CD8-positive, alpha-beta T cell (primary cell): ENCODE measurements at regions of chr16 and their contacts with region 1.

Region 1: DNA sequence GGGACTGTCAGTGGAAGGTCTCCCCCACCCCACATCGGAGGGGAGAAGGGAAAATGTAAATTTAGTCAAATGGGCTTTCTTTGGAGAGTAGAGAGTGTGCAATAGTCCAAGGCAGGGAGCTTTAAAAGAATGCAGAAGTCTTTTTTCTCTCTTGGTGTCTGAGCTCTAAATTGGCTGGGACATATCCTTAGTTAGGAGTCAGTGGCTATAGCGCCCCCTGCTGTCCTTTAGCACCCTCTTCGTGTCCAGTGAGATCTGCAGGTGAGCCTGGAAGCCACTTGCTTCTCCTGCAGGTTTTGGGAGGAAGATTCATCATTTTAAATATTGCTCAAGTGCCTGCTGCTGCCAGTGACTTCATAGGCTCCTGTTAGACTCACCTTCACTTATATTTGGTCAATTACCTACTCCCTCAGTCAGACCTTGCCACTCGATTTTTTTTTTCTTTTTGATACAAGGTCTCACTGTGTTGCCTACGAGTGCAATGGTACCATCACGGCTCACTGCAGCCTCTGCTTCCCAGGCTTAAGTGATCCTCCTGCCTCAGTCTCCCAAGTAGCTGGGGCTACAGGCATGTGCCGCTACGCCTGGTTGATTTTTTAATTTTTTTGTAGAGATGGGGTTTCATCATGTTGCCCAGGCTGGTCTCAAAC is 174.8 kb downstream of the PRKCB start:
- DNase-seq: peak; percentile 54 to 89 (median 85)
- ATAC-seq: no peak
- H3K4me3 ChIP-seq: no peak overlapping the region
- H3K4me3 Mint-ChIP-seq: no peak overlapping the region
- H3K27ac ChIP-seq: no peak overlapping the region
- H3K27ac Mint-ChIP-seq: peak overlapping the region; percentile 18
- H3K4me1 ChIP-seq: peaks cover 50% of the 10 kb centered on the region
- H3K4me1 Mint-ChIP-seq: peaks cover 66% of the 10 kb centered on the region
- H3K27me3 ChIP-seq: no peaks in the 10 kb centered on the region
- H3K27me3 Mint-ChIP-seq: no peaks in the 10 kb centered on the region
- CTCF ChIP-seq: peak; percentile 86

Region 2: GRCh38 chr16:23729503-23730424 is 280.8 kb before region 1 on chr16:
- CTCF ChIA-PET with region 1: no interaction called
- POLR2A ChIA-PET with region 1: no interaction called
- intact Hi-C with region 1: loop called in 1 of 2 experiments (anchors 2 kb)
- DNase-seq: no peak
- ATAC-seq: no peak
- H3K4me3 ChIP-seq: no peak overlapping the region
- H3K4me3 Mint-ChIP-seq: no peak overlapping the region
- H3K27ac ChIP-seq: no peak overlapping the region
- H3K27ac Mint-ChIP-seq: no peak overlapping the region
- H3K4me1 ChIP-seq: peaks cover 5% of the 10 kb centered on the region
- H3K4me1 Mint-ChIP-seq: no peaks in the 10 kb centered on the region
- H3K27me3 ChIP-seq: no peaks in the 10 kb centered on the region
- H3K27me3 Mint-ChIP-seq: peaks cover 16% of the 10 kb centered on the region
- CTCF ChIP-seq: no peak

Region 3: GRCh38 chr16:23835390-23836077 is 175.0 kb before region 1 on chr16 and contains the start of gene PRKCB:
- CTCF ChIA-PET with region 1: interaction called, 8 read pairs
- POLR2A ChIA-PET with region 1: interaction called, 3 read pairs
- intact Hi-C with region 1: loop called in 1 of 2 experiments (anchors 1 kb)
- DNase-seq: peak; percentile 80 to 94 (median 88)
- ATAC-seq: peak; percentile 88
- H3K4me3 ChIP-seq: peak within 1 kb of the TSS; percentile 71 to 93
- H3K4me3 Mint-ChIP-seq: peak within 1 kb of the TSS; percentile 99
- H3K27ac ChIP-seq: peak within 1 kb of the TSS; percentile 40 to 44
- H3K27ac Mint-ChIP-seq: peak within 1 kb of the TSS; percentile 95
- H3K4me1 ChIP-seq: peaks cover 48% of the 10 kb centered on the region
- H3K4me1 Mint-ChIP-seq: peaks cover 55% of the 10 kb centered on the region
- H3K27me3 ChIP-seq: no peaks in the 10 kb centered on the region
- H3K27me3 Mint-ChIP-seq: no peaks in the 10 kb centered on the region
- CTCF ChIP-seq: no peak
- total RNA-seq, gene PRKCB: 62.8 to 64.4 TPM

Region 4: GRCh38 chr16:23877107-23878090 is 133.2 kb before region 1 on chr16:
- CTCF ChIA-PET with region 1: interaction called, 235 read pairs
- POLR2A ChIA-PET with region 1: interaction called, 13 read pairs
- intact Hi-C with region 1: loop called (anchors 1 kb)
- DNase-seq: peak in 3 of 9 experiments; percentile 27 to 48 (median 39)
- ATAC-seq: peak; percentile 65
- H3K4me3 ChIP-seq: no peak overlapping the region
- H3K4me3 Mint-ChIP-seq: no peak overlapping the region
- H3K27ac ChIP-seq: no peak overlapping the region
- H3K27ac Mint-ChIP-seq: peak overlapping the region; percentile 64
- H3K4me1 ChIP-seq: peaks cover 72% of the 10 kb centered on the region
- H3K4me1 Mint-ChIP-seq: peaks cover 81% of the 10 kb centered on the region
- H3K27me3 ChIP-seq: no peaks in the 10 kb centered on the region
- H3K27me3 Mint-ChIP-seq: no peaks in the 10 kb centered on the region
- CTCF ChIP-seq: peak; percentile 40

Region 5: DNA sequence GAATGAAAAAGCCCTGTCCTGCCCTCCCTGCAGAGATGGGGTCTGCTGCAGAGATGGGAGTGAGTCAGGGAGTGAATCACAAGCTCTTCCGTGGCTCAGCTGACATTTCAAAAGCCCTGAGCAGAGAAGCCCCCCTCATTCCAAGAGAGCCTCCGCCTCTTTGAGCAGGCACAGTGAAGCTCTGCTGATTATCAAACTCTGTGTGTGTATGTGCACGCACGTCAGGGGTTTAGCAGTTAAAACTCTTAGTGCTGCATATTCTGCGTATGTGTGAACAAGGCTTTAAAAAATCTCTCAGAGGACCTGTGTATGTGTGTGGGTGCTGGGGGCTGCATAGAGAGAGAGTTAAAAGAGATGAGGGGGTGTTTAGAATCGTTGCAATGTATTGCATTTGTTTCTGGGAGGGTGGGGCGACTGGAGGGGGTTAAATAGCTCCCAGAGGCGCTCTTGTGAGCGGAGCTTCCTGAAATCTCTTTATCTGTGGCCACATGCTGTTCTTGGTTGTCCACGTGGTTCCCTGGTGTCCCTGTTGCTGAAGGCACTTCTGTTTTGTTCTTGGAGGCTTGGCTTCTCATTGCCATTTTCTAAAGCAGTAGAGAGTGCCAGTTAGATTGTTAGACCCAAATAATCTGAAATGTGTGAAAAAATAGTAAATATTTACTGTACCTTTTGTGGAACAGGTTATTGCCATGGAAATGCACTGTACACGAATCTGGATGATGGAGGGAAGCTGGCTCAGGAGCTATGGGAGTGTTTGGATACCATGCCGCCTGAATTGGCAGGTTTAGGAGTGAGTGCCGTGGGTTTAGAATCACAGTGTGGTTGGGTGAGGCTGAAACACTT is 58.2 kb before region 1 on chr16:
- CTCF ChIA-PET with region 1: interaction called, 27 read pairs
- POLR2A ChIA-PET with region 1: interaction called, 9 read pairs
- intact Hi-C with region 1: loop called (anchors 1 to 2 kb)
- DNase-seq: peak in 6 of 9 experiments; percentile 14 to 62 (median 52)
- ATAC-seq: peak; percentile 46
- H3K4me3 ChIP-seq: no peak overlapping the region
- H3K4me3 Mint-ChIP-seq: peak overlapping the region; percentile 76
- H3K27ac ChIP-seq: peak overlapping the region; percentile 8 to 45
- H3K27ac Mint-ChIP-seq: peak overlapping the region; percentile 96
- H3K4me1 ChIP-seq: peaks cover 73% of the 10 kb centered on the region
- H3K4me1 Mint-ChIP-seq: peaks cover 91% of the 10 kb centered on the region
- H3K27me3 ChIP-seq: no peaks in the 10 kb centered on the region
- H3K27me3 Mint-ChIP-seq: no peaks in the 10 kb centered on the region
- CTCF ChIP-seq: no peak

Region 6: DNA sequence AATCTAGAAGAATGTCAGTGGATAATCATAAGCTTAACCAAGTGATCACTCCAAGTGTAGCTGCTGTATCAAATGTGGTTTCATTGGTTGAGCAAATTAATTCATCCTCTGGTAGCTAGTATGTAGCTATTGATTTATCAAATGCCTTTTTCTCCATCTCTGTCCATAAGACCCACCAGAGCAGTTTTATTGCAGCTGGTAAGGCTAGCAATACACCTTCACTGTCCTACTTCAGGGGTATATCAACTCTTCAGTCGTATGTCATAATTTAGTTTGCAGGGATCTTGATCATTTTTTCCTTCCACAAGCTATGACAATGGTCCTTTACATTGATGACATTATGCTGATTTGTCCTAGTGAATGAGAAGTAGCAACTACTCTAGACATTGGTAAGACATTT is 15.9 kb before region 1 on chr16:
- CTCF ChIA-PET with region 1: interaction called, 24 read pairs
- POLR2A ChIA-PET with region 1: no interaction called
- intact Hi-C with region 1: no loop called
- DNase-seq: no peak
- ATAC-seq: no peak
- H3K4me3 ChIP-seq: no peak overlapping the region
- H3K4me3 Mint-ChIP-seq: no peak overlapping the region
- H3K27ac ChIP-seq: no peak overlapping the region
- H3K27ac Mint-ChIP-seq: no peak overlapping the region
- H3K4me1 ChIP-seq: no peaks in the 10 kb centered on the region
- H3K4me1 Mint-ChIP-seq: peaks cover 25% of the 10 kb centered on the region
- H3K27me3 ChIP-seq: no peaks in the 10 kb centered on the region
- H3K27me3 Mint-ChIP-seq: no peaks in the 10 kb centered on the region
- CTCF ChIP-seq: no peak

Region 7: DNA sequence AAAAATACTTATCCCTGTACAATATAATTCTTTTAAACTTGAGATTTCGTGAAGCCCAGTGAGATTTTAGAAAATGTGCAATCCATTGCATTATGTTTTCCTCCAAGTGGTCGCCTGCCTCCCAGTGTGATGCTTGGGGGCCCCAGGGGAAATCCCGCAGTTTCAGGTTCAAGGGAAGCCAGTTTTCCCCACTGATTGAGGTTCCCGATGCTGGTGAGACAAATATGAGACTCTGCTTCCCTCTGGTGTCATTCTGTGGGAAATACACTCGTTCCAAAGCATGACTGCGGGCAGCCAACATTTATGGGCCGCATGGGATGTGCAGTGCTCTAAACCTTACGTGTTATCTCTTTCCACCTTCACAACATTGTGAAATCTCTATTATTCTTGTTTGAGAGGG is 26.0 kb after region 1 on chr16:
- CTCF ChIA-PET with region 1: interaction called, 52 read pairs
- POLR2A ChIA-PET with region 1: interaction called, 9 read pairs
- intact Hi-C with region 1: loop called (anchors 1 kb)
- DNase-seq: peak in 6 of 9 experiments; percentile 14 to 73 (median 46)
- ATAC-seq: peak; percentile 56
- H3K4me3 ChIP-seq: no peak overlapping the region
- H3K4me3 Mint-ChIP-seq: peak overlapping the region; percentile 49
- H3K27ac ChIP-seq: no peak overlapping the region
- H3K27ac Mint-ChIP-seq: no peak overlapping the region
- H3K4me1 ChIP-seq: peaks cover 50% of the 10 kb centered on the region
- H3K4me1 Mint-ChIP-seq: peaks cover 48% of the 10 kb centered on the region
- H3K27me3 ChIP-seq: no peaks in the 10 kb centered on the region
- H3K27me3 Mint-ChIP-seq: no peaks in the 10 kb centered on the region
- CTCF ChIP-seq: peak; percentile 82

Region 8: DNA sequence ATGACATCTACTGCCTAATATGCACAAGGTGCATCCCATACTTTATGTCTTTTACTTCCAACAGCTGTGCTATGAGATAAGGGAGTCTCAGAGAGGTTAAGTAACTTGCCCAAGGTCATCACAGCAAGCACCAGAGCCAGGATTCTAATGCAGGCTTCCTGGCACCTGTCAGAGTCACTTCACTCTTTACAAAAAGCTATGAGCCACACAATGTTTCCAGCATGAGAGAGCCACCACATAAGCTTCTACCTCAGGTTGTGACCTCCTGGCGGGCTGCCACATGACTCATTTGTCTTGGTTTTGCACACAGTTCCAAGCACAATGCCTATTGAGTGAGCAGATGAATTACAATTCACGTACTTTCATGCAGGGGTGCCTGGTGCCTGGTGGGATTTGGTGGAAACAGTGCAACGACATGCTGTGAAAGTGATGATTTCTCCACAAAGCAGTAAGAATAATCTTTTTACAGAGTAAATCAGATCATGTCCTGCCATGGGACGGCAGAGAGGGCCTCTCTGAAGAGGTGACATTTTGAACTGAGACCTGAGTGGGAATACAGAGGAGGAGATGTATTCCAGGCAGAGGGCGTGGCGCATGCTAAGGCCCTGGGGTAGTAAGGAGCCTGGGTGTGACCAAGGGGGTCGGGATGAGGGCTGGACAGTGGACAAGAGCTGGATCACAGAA is 298.8 kb after region 1 on chr16:
- CTCF ChIA-PET with region 1: no interaction called
- POLR2A ChIA-PET with region 1: no interaction called
- intact Hi-C with region 1: no loop called
- DNase-seq: no peak
- ATAC-seq: no peak
- H3K4me3 ChIP-seq: no peak overlapping the region
- H3K4me3 Mint-ChIP-seq: no peak overlapping the region
- H3K27ac ChIP-seq: no peak overlapping the region
- H3K27ac Mint-ChIP-seq: no peak overlapping the region
- H3K4me1 ChIP-seq: no peaks in the 10 kb centered on the region
- H3K4me1 Mint-ChIP-seq: no peaks in the 10 kb centered on the region
- H3K27me3 ChIP-seq: peaks cover 0 to 2% of the 10 kb centered on the region in 2 experiments
- H3K27me3 Mint-ChIP-seq: peaks cover 19% of the 10 kb centered on the region
- CTCF ChIP-seq: no peak